ENCODE measurements at regions of chr2 and their contacts with region 1.

Region 1: GRCh38 chr2:201707753-201708152 is 9.3 kb upstream of the MPP4 start:
- DNase-seq: peak; percentile 67
- H3K4me3 ChIP-seq: no peak overlapping the region
- H3K27ac ChIP-seq: peak overlapping the region; percentile 10
- H3K4me1 ChIP-seq: peaks cover 28% of the 10 kb centered on the region
- H3K27me3 ChIP-seq: no peaks in the 10 kb centered on the region
- CTCF ChIP-seq: peak; percentile 17 to 38
- POLR2A ChIP-seq: no peak

Region 2: DNA sequence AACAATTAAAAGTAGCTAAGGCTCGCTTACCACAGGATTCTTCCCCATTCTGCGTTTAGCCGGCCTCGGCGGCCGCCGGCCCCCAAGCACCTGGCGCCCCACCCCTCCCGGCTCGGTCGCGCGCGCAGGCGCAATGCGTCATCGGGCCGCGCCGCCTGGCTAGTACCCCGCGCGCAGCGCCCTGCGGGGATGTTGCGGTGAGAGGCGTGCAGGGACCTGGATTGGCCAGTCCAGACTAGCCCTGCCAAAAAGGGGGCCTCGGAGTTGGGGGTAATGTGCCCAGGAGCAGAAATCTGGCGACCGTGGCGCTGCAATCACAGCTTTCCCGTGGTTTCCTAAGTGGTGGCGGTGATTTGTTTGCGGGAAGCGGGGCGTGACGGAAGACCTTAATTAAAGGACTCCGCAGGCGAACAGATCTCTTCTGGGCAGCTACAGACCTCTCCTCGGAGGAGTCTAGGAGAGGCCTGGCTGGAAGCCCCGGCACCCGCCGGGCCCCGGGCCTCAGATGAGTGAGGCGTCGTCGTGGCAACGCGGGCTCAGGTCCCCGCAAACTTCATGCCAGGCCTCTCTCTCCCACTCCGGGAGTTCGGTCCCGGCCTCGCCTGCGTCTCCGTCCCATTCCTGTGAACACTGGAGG is 65.1 kb before region 1 on chr2:
- CTCF ChIA-PET with region 1: interaction called, 13 read pairs
- POLR2A ChIA-PET with region 1: no interaction called
- dilution Hi-C with region 1: no loop called
- intact Hi-C with region 1: loop called (anchors 2 kb)
- DNase-seq: peak; percentile 85
- H3K4me3 ChIP-seq: peak overlapping the region; percentile 62 to 93 (median 77)
- H3K27ac ChIP-seq: peak overlapping the region; percentile 87
- H3K4me1 ChIP-seq: peaks cover 12% of the 10 kb centered on the region
- H3K27me3 ChIP-seq: no peaks in the 10 kb centered on the region
- CTCF ChIP-seq: peak in 1 of 2 donors; percentile 7
- POLR2A ChIP-seq: peak; percentile 74

Region 3: DNA sequence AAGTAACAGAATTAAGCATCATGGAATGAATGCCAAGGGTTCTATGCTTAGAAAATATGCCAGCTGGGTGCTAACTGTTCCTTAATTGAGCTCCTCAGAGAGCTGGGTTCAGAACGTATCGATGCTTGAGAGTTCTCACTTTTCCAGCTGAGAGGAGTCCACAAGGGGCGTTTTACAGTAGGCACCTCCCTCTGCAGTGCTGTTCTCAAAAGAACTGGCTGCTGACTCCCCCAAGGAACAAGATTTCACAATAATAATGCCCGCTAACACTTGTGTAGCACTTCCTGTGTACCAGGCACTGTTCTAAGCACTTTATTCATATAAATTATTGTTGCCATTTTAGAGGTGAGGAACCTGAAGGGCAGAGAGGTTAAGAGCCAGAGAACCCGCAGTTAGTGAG is 46.4 kb before region 1 on chr2:
- CTCF ChIA-PET with region 1: interaction called, 10 read pairs
- POLR2A ChIA-PET with region 1: no interaction called
- dilution Hi-C with region 1: no loop called
- intact Hi-C with region 1: loop called (anchors 1 kb)
- DNase-seq: no peak
- H3K4me3 ChIP-seq: no peak overlapping the region
- H3K27ac ChIP-seq: no peak overlapping the region
- H3K4me1 ChIP-seq: peaks cover 2% of the 10 kb centered on the region
- H3K27me3 ChIP-seq: no peaks in the 10 kb centered on the region
- CTCF ChIP-seq: no peak
- POLR2A ChIP-seq: no peak

Region 4: DNA sequence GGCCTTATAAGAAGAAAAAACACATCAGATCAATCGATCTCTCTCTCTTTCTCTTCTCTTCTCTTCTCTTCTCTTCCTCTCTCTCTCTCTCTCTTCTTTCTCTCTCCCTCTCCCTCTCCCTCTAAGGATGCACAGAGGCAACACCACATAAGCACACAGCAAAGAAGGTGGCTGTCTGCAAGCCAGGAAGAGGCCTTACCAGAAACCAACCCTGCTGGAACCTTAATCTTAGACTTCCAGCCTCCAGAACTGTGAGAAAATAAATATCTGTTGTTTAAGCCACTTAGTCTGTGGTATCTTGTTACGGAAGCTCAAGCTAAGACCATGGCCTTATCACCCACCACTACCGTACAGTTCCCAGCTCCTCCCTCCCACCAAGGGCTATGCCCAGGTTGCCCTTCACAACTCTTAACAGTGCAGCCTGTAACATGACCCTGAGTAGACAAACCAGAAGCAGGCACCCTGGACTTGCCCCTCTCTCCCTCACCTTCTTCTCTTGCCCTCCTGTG is 39.3 kb before region 1 on chr2:
- CTCF ChIA-PET with region 1: interaction called, 14 read pairs
- POLR2A ChIA-PET with region 1: no interaction called
- dilution Hi-C with region 1: no loop called
- intact Hi-C with region 1: loop called (anchors 1 kb)
- DNase-seq: no peak
- H3K4me3 ChIP-seq: no peak overlapping the region
- H3K27ac ChIP-seq: no peak overlapping the region
- H3K4me1 ChIP-seq: peaks cover 2% of the 10 kb centered on the region
- H3K27me3 ChIP-seq: no peaks in the 10 kb centered on the region
- CTCF ChIP-seq: no peak
- POLR2A ChIP-seq: no peak

Region 5: DNA sequence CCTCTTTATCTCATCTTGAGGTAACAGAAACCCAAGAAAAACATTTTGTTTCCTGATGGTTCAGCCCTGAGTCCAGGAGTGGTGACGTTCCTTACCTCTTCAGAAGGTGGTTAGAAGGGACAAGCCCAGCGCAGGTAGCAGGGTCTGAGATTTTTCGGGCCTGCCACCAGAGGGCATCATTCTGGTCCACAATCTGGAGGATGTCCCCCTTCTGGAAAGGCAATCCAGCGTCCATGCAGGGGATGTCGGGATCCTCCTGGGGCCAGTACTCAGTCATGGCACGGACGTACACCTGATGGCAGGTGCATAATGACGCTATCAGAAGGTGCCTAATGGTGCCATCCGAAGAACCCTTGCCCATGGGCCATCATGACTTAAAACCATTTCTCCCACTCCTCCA is 27.0 kb before region 1 on chr2:
- CTCF ChIA-PET with region 1: interaction called, 24 read pairs
- POLR2A ChIA-PET with region 1: no interaction called
- dilution Hi-C with region 1: no loop called
- intact Hi-C with region 1: loop called (anchors 1 kb)
- DNase-seq: peak; percentile 38
- H3K4me3 ChIP-seq: no peak overlapping the region
- H3K27ac ChIP-seq: no peak overlapping the region
- H3K4me1 ChIP-seq: no peaks in the 10 kb centered on the region
- H3K27me3 ChIP-seq: no peaks in the 10 kb centered on the region
- CTCF ChIP-seq: peak; percentile 56 to 63
- POLR2A ChIP-seq: no peak